Mammary epithelial cell (primary cell): ENCODE measurements at regions of chr4 and their contacts with region 1.

Region 1: GRCh38 chr4:154779362-154779947 is 1.6 kb upstream of the RBM46 start:
- DNase-seq: peak; percentile 29
- H3K4me3 ChIP-seq: no peak overlapping the region
- H3K27ac ChIP-seq: no peak overlapping the region
- H3K4me1 ChIP-seq: no peaks in the 10 kb centered on the region
- H3K27me3 ChIP-seq: no peaks in the 10 kb centered on the region
- CTCF ChIP-seq: peak; percentile 57 to 70

Region 2: GRCh38 chr4:154485127-154485773 is 294.2 kb before region 1 on chr4:
- CTCF ChIA-PET with region 1: no interaction called
- dilution Hi-C with region 1: no loop called
- in situ Hi-C with region 1: no loop called
- intact Hi-C with region 1: no loop called
- DNase-seq: no peak
- H3K4me3 ChIP-seq: no peak overlapping the region
- H3K27ac ChIP-seq: no peak overlapping the region
- H3K4me1 ChIP-seq: no peaks in the 10 kb centered on the region
- H3K27me3 ChIP-seq: peaks cover 8% of the 10 kb centered on the region
- CTCF ChIP-seq: no peak

Region 3: GRCh38 chr4:154559494-154560418 is 219.7 kb before region 1 on chr4:
- CTCF ChIA-PET with region 1: no interaction called
- dilution Hi-C with region 1: no loop called
- in situ Hi-C with region 1: no loop called
- intact Hi-C with region 1: loop called (anchors 1 kb)
- DNase-seq: peak; percentile 63
- H3K4me3 ChIP-seq: no peak overlapping the region
- H3K27ac ChIP-seq: no peak overlapping the region
- H3K4me1 ChIP-seq: peaks cover 23% of the 10 kb centered on the region
- H3K27me3 ChIP-seq: no peaks in the 10 kb centered on the region
- CTCF ChIP-seq: peak; percentile 68 to 72

Region 4: GRCh38 chr4:154626793-154627484 is 152.5 kb before region 1 on chr4:
- CTCF ChIA-PET with region 1: no interaction called
- dilution Hi-C with region 1: no loop called
- in situ Hi-C with region 1: no loop called
- intact Hi-C with region 1: loop called (anchors 1 kb)
- DNase-seq: peak; percentile 65
- H3K4me3 ChIP-seq: peak overlapping the region; percentile 27 to 51 (median 48)
- H3K27ac ChIP-seq: no peak overlapping the region
- H3K4me1 ChIP-seq: peaks cover 17% of the 10 kb centered on the region
- H3K27me3 ChIP-seq: no peaks in the 10 kb centered on the region
- CTCF ChIP-seq: peak; percentile 60 to 85

Region 5: DNA sequence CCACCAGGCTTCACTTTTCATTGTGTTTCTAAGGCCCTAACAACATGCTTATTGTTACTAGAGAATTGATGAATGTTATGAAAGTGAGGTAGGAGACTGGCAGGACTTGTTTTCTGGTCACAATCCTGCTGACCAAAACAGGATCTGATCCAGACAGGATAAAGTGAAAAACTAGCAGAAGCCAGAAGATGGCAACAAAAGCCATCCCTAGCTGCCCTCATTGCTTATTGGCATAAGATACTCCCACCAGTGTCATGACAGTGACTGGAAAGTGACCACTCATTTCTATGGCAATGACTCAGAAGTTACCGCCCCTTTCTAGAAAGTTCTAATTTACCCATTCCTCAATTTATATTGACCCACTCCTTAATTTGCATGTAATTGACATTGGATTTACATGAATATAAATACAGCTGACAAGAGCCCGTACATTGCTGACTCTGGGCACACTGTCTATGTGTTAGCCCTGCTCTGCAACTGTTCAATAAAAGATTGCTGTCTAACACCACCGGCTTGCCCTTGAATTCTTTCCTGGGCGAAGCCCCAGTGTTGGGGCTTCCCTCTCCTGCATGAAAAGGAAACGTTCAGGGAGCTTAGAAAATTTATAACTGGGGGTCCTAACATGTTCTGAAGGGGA is 137.0 kb before region 1 on chr4:
- CTCF ChIA-PET with region 1: no interaction called
- dilution Hi-C with region 1: no loop called
- in situ Hi-C with region 1: loop called in 1 of 2 experiments (anchors 10 kb)
- intact Hi-C with region 1: no loop called
- DNase-seq: peak; percentile 45
- H3K4me3 ChIP-seq: no peak overlapping the region
- H3K27ac ChIP-seq: no peak overlapping the region
- H3K4me1 ChIP-seq: peaks cover 18% of the 10 kb centered on the region
- H3K27me3 ChIP-seq: no peaks in the 10 kb centered on the region
- CTCF ChIP-seq: peak in 1 of 2 donors; percentile 14

Region 6: DNA sequence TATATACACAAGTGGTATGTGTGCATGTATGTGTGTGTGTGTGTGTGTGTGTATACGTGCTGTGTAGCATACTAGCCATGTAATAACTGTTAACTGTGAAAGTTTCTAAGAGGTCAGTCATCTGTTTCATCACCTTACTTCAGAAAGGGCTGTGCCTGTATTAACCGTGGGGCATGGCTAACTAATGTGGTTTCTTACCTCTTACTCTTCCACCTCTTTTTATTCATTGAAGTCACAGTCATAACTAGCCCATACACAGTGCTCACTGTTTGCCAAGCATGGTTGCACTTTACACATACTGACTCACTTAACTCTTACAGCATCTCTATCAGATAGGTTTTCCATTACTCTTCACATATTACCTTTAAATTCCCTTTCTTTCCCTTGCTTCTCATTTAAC is 59.3 kb before region 1 on chr4:
- CTCF ChIA-PET with region 1: interaction called, 18 read pairs
- dilution Hi-C with region 1: no loop called
- in situ Hi-C with region 1: no loop called
- intact Hi-C with region 1: loop called (anchors 1 kb)
- DNase-seq: peak; percentile 98
- H3K4me3 ChIP-seq: no peak overlapping the region
- H3K27ac ChIP-seq: peak overlapping the region; percentile 100
- H3K4me1 ChIP-seq: peaks cover 47% of the 10 kb centered on the region
- H3K27me3 ChIP-seq: no peaks in the 10 kb centered on the region
- CTCF ChIP-seq: no peak